PC-9 (cell line): ENCODE measurements at regions of chr2 and their contacts with region 1.

Region 1: DNA sequence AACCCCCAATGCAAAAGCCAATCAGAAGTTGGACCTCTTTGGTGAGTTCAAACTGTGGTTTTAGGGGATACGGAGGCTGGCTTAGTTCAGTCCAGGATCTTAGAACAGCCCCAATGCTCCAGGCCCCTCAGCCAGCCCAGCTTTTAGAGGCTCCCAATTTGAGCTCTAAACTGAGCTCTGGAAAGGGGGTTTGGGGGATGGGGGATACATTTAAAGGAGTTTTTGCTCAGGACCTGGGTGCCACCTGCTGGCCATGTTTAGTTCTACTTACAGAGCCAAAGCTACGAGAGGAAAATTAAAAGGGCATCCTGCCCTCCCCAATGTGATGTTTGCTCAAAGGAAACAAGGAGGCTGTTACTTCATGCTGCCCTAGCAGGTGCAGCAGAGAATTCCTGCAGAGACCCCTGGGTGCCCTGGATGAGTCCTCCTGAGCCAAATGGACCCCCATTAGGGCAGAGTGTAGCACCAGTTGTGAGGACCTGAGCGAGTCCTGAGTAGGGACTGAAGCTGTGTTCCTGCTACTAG is 15.9 kb upstream of the TMEM214 start:
- DNase-seq: peak; percentile 53 to 56
- H3K4me3 ChIP-seq: no peak overlapping the region
- H3K27ac ChIP-seq: peak overlapping the region; percentile 85; the same call in 1 of the 2 replicates
- H3K4me1 ChIP-seq: peaks cover 61% of the 10 kb centered on the region
- H3K27me3 ChIP-seq: no peaks in the 10 kb centered on the region
- CTCF ChIP-seq: peak; percentile 95

Region 2: GRCh38 chr2:26757873-26758789 is 258.7 kb before region 1 on chr2:
- CTCF ChIA-PET with region 1: no interaction called
- POLR2A ChIA-PET with region 1: no interaction called
- intact Hi-C with region 1: loop called (anchors 10 kb)
- DNase-seq: peak; percentile 85 to 99
- H3K4me3 ChIP-seq: peak overlapping the region; percentile 21; the same call in 1 of the 2 replicates
- H3K27ac ChIP-seq: peak overlapping the region; percentile 98
- H3K4me1 ChIP-seq: peaks cover 54% of the 10 kb centered on the region
- H3K27me3 ChIP-seq: no peaks in the 10 kb centered on the region
- CTCF ChIP-seq: no peak

Region 3: DNA sequence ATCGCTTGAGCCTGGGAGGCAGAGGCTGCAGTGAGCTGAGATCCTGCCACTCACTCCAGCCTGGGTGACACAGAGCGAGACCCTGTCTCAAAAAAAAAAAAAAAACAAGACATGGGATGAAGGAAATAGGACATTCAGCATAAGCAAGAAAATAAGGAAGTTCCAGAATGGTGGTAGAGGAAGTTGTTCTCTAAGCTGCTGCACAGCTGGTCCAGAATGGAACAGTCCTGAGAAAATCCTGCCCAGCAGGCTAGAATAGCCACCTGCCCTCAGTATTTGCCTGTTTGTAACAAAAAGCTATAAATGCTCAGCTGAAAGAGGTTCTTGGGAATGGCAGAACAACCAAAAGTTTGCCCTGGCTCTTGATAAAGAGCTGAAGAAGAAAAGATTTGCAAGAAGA is 57.5 kb before region 1 on chr2:
- CTCF ChIA-PET with region 1: interaction called, 43 read pairs
- POLR2A ChIA-PET with region 1: no interaction called
- intact Hi-C with region 1: loop called (anchors 1 kb)
- DNase-seq: no peak
- H3K4me3 ChIP-seq: no peak overlapping the region
- H3K27ac ChIP-seq: no peak overlapping the region
- H3K4me1 ChIP-seq: peaks cover 10% of the 10 kb centered on the region
- H3K27me3 ChIP-seq: peaks cover 14% of the 10 kb centered on the region; the same call in 1 of the 2 replicates
- CTCF ChIP-seq: no peak

Region 4: GRCh38 chr2:27032495-27033252 is 15.8 kb after region 1 on chr2 and contains the start of gene TMEM214:
- CTCF ChIA-PET with region 1: interaction called, 4 read pairs
- POLR2A ChIA-PET with region 1: interaction called, 27 read pairs
- intact Hi-C with region 1: no loop called
- DNase-seq: peak; percentile 70 to 83
- H3K4me3 ChIP-seq: peak within 1 kb of the TSS; percentile 95
- H3K27ac ChIP-seq: peak within 1 kb of the TSS; percentile 29; the same call in 1 of the 2 replicates
- H3K4me1 ChIP-seq: peaks cover 16% of the 10 kb centered on the region
- H3K27me3 ChIP-seq: no peaks in the 10 kb centered on the region
- CTCF ChIP-seq: no peak
- total RNA-seq, gene TMEM214: 60.9 and 65.6 TPM in 2 replicates

Region 5: DNA sequence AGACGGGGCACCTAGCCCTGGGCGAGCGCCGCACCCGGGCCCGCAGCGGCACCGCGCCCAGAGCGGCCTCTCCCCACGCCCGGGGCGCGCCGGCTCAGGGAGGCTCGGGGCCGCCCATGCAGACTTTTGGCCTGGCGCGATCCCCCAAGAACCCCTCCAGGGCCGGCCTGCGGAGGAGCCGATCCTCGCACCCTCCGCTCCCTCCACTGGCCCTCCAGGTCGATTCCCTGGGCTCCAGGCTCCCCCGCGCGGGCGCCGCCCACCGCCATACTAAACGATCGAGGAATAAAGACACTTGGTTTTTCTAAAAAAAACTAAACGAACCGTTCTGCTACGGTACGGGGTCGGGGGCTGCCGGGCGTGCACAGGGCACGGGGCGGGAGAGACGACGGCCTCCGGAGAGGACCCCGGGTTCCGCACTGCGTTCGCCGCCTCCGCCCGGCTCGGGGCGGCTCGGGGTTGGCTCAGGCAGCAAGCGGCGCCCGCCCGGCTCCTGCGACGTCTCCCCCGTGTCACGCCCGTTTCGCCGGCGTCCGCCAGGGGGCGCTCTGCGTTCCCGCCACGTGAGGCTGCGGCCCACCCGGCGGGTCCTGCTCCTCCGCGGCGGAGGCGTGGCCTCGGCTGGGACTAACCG is 69.3 kb after region 1 on chr2:
- CTCF ChIA-PET with region 1: interaction called, 8 read pairs
- POLR2A ChIA-PET with region 1: interaction called, 20 read pairs
- intact Hi-C with region 1: loop called (anchors 2 kb)
- DNase-seq: peak; percentile 79 to 97
- H3K4me3 ChIP-seq: peak overlapping the region; percentile 94
- H3K27ac ChIP-seq: no peak overlapping the region
- H3K4me1 ChIP-seq: peaks cover 25% of the 10 kb centered on the region
- H3K27me3 ChIP-seq: no peaks in the 10 kb centered on the region
- CTCF ChIP-seq: peak; percentile 76